HepG2 (cell line): ENCODE measurements at regions of chr4 and their contacts with region 1.

Region 1: GRCh38 chr4:76896731-76897535 is 1.0 kb downstream of the SOWAHB start:
- DNase-seq: no peak
- ATAC-seq: peak; percentile 80
- H3K4me3 ChIP-seq: peak overlapping the region; percentile 51 to 78 (median 64); a peak in 5 of 6 replicates
- H3K27ac ChIP-seq: no peak overlapping the region
- H3K4me1 ChIP-seq: peaks cover 42% of the 10 kb centered on the region
- H3K27me3 ChIP-seq: peaks cover 1 to 29% of the 10 kb centered on the region in 2 experiments; a peak in 4 of 5 replicates
- CTCF ChIP-seq: no peak
- EP300 ChIP-seq: no peak
- POLR2A ChIP-seq: no peak
- RAD21 ChIP-seq: no peak

Region 2: GRCh38 chr4:76105652-76106051 is 791.3 kb before region 1 on chr4:
- CTCF ChIA-PET with region 1: no interaction called
- POLR2A ChIA-PET with region 1: no interaction called
- in situ Hi-C with region 1: no loop called
- intact Hi-C with region 1: no loop called
- DNase-seq: no peak
- ATAC-seq: peak; percentile 76
- H3K4me3 ChIP-seq: no peak overlapping the region
- H3K27ac ChIP-seq: no peak overlapping the region
- H3K4me1 ChIP-seq: no peaks in the 10 kb centered on the region
- H3K27me3 ChIP-seq: no peaks in the 10 kb centered on the region
- CTCF ChIP-seq: no peak
- EP300 ChIP-seq: no peak
- POLR2A ChIP-seq: no peak
- RAD21 ChIP-seq: no peak

Region 3: DNA sequence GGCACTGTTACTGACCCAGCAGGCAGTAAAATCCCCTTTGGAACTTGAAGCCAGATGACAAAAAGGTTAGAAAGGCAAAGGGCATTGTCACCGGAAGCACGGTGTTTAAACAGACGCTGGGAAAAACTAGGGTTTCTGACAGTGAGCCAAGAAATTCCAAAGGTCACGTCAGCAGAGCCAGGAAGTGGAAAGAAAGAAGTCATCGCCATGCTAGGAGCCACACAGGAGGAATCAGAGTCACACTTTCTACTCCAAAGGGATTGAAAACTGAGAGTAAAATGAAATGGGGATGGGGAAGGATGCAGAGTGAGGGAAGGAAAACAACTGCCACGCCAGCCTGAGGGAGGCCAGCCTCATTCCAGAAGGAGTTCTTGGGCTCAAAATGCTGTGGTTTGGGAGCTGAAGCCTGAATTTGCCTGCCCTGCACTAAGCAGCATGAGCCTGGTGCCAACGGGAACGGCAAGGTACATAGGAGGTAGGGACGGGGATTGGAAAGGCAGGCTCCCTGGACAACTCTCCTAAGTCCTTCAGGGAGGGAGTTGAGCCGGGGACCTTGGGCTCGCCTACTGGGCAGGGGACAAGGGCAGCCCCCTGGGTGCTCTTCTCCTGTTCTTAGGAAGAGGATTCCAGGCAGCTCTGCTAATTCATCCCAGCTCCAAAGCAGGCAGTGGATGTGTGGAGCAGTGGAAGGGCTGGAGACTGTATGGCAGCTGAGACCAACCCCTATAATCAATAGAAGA is 65.8 kb before region 1 on chr4:
- CTCF ChIA-PET with region 1: no interaction called
- POLR2A ChIA-PET with region 1: interaction called, 3 read pairs
- in situ Hi-C with region 1: no loop called
- intact Hi-C with region 1: loop called (anchors 2 kb)
- DNase-seq: peak; percentile 94
- ATAC-seq: peak; percentile 91
- H3K4me3 ChIP-seq: peak overlapping the region; percentile 77 to 81 (median 80)
- H3K27ac ChIP-seq: peak overlapping the region; percentile 92
- H3K4me1 ChIP-seq: peaks cover 21% of the 10 kb centered on the region
- H3K27me3 ChIP-seq: no peaks in the 10 kb centered on the region; a peak in 1 of 5 replicates
- CTCF ChIP-seq: no peak
- EP300 ChIP-seq: peak; percentile 2 to 81; a peak in 2 of 4 replicates
- POLR2A ChIP-seq: peak; percentile 75 to 91
- RAD21 ChIP-seq: no peak

Region 4: GRCh38 chr4:76850010-76850441 is 46.9 kb before region 1 on chr4:
- CTCF ChIA-PET with region 1: no interaction called
- POLR2A ChIA-PET with region 1: no interaction called
- in situ Hi-C with region 1: no loop called
- intact Hi-C with region 1: loop called (anchors 5 kb)
- DNase-seq: peak; percentile 62
- ATAC-seq: no peak
- H3K4me3 ChIP-seq: no peak overlapping the region
- H3K27ac ChIP-seq: no peak overlapping the region
- H3K4me1 ChIP-seq: peaks cover 32% of the 10 kb centered on the region
- H3K27me3 ChIP-seq: no peaks in the 10 kb centered on the region
- CTCF ChIP-seq: no peak
- EP300 ChIP-seq: peak in 1 of 2 experiments; percentile 60; a peak in 1 of 4 replicates
- POLR2A ChIP-seq: no peak
- RAD21 ChIP-seq: no peak

Region 5: DNA sequence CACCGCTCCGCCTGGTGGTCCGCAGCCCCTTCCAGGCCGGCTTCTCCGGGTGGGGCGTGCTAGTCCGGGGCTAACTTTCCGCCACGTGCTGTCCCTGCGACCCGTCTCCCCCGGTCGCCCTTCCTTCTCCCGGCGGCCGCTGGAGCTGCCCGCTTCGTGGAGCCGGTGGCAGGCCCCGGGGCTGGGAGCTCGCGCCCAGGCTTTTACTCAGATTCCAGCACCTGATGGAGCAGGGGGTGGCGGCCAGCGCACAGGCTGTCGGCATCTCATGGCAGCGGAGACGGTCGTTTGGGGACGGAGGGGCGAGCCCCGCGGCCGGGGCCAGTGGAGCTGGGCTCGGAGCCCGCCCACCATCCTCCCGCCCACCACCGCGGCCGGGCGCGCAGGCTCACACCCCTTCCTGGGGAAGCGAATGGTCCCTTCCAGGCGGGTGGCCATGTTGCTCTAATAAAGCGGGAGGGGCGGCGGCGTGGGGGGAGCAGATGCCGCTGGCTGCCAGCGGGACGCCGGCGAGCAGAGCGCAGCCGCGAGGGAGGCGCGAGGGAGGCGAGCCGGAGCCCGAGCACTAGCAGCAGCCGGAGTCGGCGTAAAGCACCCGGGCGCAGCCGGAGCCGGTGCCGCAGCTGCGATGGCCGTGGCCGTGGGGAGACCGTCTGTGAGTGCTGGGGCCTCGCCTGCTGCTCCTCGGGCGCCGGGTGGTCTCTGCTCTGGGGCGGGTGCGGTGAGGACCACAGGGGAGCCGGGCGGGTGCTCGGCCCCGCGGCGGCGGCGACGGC is 52.5 kb after region 1 on chr4 and contains the start of gene SEPTIN11:
- CTCF ChIA-PET with region 1: no interaction called
- POLR2A ChIA-PET with region 1: interaction called, 15 read pairs
- in situ Hi-C with region 1: no loop called
- intact Hi-C with region 1: loop called (anchors 1 kb)
- DNase-seq: peak; percentile 85
- ATAC-seq: peak; percentile 86
- H3K4me3 ChIP-seq: peak within 1 kb of the TSS; percentile 88 to 94 (median 92)
- H3K27ac ChIP-seq: peak within 1 kb of the TSS; percentile 82
- H3K4me1 ChIP-seq: peaks cover 29% of the 10 kb centered on the region
- H3K27me3 ChIP-seq: no peaks in the 10 kb centered on the region
- CTCF ChIP-seq: no peak
- EP300 ChIP-seq: 0 out of 4 replicates have a peak, but pooled peaks of 1 of the 2 experiments have one; percentile 16
- POLR2A ChIP-seq: peak in 1 of 2 experiments; percentile 91; a peak in 2 of 4 replicates
- RAD21 ChIP-seq: 0 out of 2 replicates have a peak, but pooled peaks have one; percentile 7
- total RNA-seq, gene SEPTIN11: 47.3 and 87.4 TPM in 2 replicates

Region 6: DNA sequence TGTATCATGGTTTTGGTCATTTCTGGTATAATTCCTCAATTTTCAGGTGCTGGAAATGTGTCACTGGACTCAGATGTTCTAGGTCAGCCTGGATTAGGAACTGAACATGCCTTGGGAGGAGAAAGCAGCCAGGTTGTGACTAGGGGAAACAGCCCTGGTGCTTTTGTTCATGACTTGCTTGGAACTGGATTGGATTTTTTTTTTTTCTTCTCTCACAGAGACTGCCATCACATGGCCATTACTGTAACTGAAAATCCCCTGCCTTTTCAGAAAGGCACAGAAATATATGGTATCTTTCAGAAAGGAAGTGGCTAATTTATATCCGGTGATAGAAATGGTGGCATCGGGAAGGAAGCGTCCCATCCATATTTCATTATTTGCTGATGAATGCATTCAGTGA is 87.2 kb after region 1 on chr4:
- CTCF ChIA-PET with region 1: no interaction called
- POLR2A ChIA-PET with region 1: no interaction called
- in situ Hi-C with region 1: no loop called
- intact Hi-C with region 1: loop called (anchors 2 kb)
- DNase-seq: peak; percentile 10
- ATAC-seq: peak; percentile 67
- H3K4me3 ChIP-seq: no peak overlapping the region
- H3K27ac ChIP-seq: no peak overlapping the region
- H3K4me1 ChIP-seq: peaks cover 19% of the 10 kb centered on the region
- H3K27me3 ChIP-seq: no peaks in the 10 kb centered on the region
- CTCF ChIP-seq: 0 out of 2 replicates have a peak, but pooled peaks have one; percentile 11
- EP300 ChIP-seq: no peak
- POLR2A ChIP-seq: no peak
- RAD21 ChIP-seq: no peak

Region 7: GRCh38 chr4:77022560-77023179 is 125.7 kb after region 1 on chr4:
- CTCF ChIA-PET with region 1: no interaction called
- POLR2A ChIA-PET with region 1: no interaction called
- in situ Hi-C with region 1: no loop called
- intact Hi-C with region 1: no loop called
- DNase-seq: no peak
- ATAC-seq: no peak
- H3K4me3 ChIP-seq: no peak overlapping the region
- H3K27ac ChIP-seq: no peak overlapping the region
- H3K4me1 ChIP-seq: peaks cover 34% of the 10 kb centered on the region
- H3K27me3 ChIP-seq: no peaks in the 10 kb centered on the region
- CTCF ChIP-seq: no peak
- EP300 ChIP-seq: no peak
- POLR2A ChIP-seq: no peak
- RAD21 ChIP-seq: no peak

Region 8: GRCh38 chr4:77044461-77045150 is 147.7 kb after region 1 on chr4:
- CTCF ChIA-PET with region 1: no interaction called
- POLR2A ChIA-PET with region 1: no interaction called
- in situ Hi-C with region 1: no loop called
- intact Hi-C with region 1: loop called (anchors 5 kb)
- DNase-seq: peak; percentile 9
- ATAC-seq: peak; percentile 39
- H3K4me3 ChIP-seq: no peak overlapping the region
- H3K27ac ChIP-seq: no peak overlapping the region
- H3K4me1 ChIP-seq: peaks cover 13% of the 10 kb centered on the region
- H3K27me3 ChIP-seq: no peaks in the 10 kb centered on the region
- CTCF ChIP-seq: peak; percentile 58
- EP300 ChIP-seq: no peak
- POLR2A ChIP-seq: no peak
- RAD21 ChIP-seq: no peak